IMR-90 (cell line): ENCODE measurements at regions of chr1 and their contacts with region 1.

Region 1: GRCh38 chr1:183234660-183235476 is 48.8 kb downstream of the LAMC2 start:
- DNase-seq: peak; percentile 98
- ATAC-seq: peak; percentile 89
- H3K4me3 ChIP-seq: peak overlapping the region; percentile 41
- H3K27ac ChIP-seq: peak overlapping the region; percentile 76
- H3K4me1 ChIP-seq: peaks cover 13% of the 10 kb centered on the region
- H3K27me3 ChIP-seq: no peaks in the 10 kb centered on the region
- CTCF ChIP-seq: peak; percentile 74
- POLR2A ChIP-seq: peak; percentile 54; the same call in 1 of the 2 replicates
- RAD21 ChIP-seq: peak; percentile 47

Region 2: GRCh38 chr1:183148599-183148998 is 86.3 kb before region 1 on chr1:
- CTCF ChIA-PET with region 1: interaction called, 7 read pairs
- POLR2A ChIA-PET with region 1: interaction called, 5 read pairs
- dilution Hi-C with region 1: no loop called
- in situ Hi-C with region 1: no loop called
- intact Hi-C with region 1: loop called (anchors 5 kb)
- DNase-seq: peak; percentile 64
- ATAC-seq: peak; percentile 71
- H3K4me3 ChIP-seq: no peak overlapping the region
- H3K27ac ChIP-seq: no peak overlapping the region
- H3K4me1 ChIP-seq: peaks cover 5% of the 10 kb centered on the region; the same call in 1 of the 2 replicates
- H3K27me3 ChIP-seq: no peaks in the 10 kb centered on the region
- CTCF ChIP-seq: no peak
- POLR2A ChIP-seq: no peak
- RAD21 ChIP-seq: no peak

Region 3: GRCh38 chr1:183246436-183246835 is 11.6 kb after region 1 on chr1:
- CTCF ChIA-PET with region 1: interaction called, 10 read pairs
- POLR2A ChIA-PET with region 1: no interaction called
- dilution Hi-C with region 1: no loop called
- in situ Hi-C with region 1: no loop called
- intact Hi-C with region 1: no loop called
- DNase-seq: no peak
- ATAC-seq: 0 out of 2 replicates have a peak, but pooled peaks have one; percentile 11
- H3K4me3 ChIP-seq: no peak overlapping the region
- H3K27ac ChIP-seq: no peak overlapping the region
- H3K4me1 ChIP-seq: no peaks in the 10 kb centered on the region
- H3K27me3 ChIP-seq: no peaks in the 10 kb centered on the region
- CTCF ChIP-seq: no peak
- POLR2A ChIP-seq: no peak
- RAD21 ChIP-seq: no peak

Region 4: DNA sequence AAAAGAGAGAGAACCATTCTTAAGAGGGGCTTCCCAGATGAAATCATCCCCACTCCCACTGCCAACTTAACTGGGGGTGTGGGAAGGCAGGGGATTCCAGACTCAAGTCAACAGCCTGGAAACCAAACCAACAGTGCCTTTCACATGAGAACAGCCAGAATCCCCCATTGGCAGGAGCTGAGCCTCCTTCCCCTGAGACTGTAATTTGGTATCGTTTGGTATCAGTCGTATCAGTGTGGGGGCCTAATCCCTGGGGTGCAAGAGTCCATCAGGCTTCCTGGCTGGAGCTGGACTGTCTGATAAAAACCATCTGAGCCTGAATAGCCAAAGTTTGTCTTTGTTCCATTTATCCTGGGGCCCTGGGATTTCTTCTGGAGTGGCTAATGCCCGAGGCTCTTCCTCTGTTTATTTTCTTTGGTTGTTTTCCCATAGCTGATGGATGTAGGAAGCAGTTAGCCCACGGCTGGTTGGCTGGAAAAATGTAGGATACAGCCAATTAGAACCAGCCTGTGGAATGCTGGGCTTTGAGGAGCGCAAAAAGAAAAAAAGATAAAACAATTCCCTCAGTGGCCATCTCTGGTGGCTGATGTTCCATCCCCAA is 35.8 kb after region 1 on chr1:
- CTCF ChIA-PET with region 1: interaction called, 6 read pairs
- POLR2A ChIA-PET with region 1: interaction called, 3 read pairs
- dilution Hi-C with region 1: no loop called
- in situ Hi-C with region 1: no loop called
- intact Hi-C with region 1: loop called (anchors 2 kb)
- DNase-seq: peak; percentile 96
- ATAC-seq: peak; percentile 66
- H3K4me3 ChIP-seq: no peak overlapping the region
- H3K27ac ChIP-seq: peak overlapping the region; percentile 96
- H3K4me1 ChIP-seq: peaks cover 26% of the 10 kb centered on the region
- H3K27me3 ChIP-seq: no peaks in the 10 kb centered on the region
- CTCF ChIP-seq: no peak
- POLR2A ChIP-seq: no peak
- RAD21 ChIP-seq: no peak